Activated B cell treated with CpG ODN at 0.5 μM for 24 hours (primary cell): ENCODE measurements at regions of chr2 and their contacts with region 1.

Region 1: DNA sequence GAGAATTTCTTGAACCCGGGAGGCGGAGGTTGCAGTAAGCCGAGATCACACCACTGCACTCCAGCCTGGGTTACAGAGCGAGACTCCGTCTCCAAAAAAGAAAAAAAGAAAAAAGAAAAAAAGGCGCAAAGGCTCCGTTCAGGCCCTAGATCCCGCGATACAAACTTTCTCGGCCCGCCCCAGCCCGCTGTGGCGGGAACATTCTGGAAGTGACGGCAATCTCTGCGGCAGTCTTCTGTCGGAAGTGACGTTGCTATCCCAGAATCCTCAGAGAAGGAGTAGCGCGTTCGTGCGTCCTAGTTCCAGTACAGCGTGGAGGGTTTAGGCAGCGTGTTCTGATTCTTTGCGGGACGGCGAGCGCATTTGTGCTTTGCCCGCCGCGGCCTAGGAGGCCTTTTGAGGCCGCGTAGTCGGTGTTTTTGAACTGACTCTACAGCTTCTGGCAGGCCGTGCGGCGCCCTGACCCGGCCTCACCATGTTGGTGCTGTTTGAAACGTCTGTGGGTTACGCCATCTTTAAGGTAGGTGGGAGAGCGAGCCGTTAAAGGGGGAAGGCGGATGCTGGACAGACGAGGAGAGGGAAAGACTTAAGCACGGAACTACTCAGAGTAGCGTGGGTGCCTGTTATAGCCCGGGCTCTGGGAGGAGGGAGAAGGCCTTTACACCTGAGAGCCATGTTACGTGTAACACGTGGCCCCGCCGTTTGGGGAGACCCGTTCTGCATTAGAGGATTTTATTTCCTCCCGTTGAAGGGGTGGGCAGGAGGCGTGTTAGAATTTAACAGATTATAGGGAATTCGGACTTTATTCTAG is at the start of gene NOP58:
- DNase-seq: peak; percentile 78
- ATAC-seq: peak; percentile 87
- H3K4me3 Mint-ChIP-seq: peak within 1 kb of the TSS; percentile 38
- H3K27ac Mint-ChIP-seq: no peak within 1 kb of the TSS
- H3K4me1 Mint-ChIP-seq: peaks cover 30% of the 10 kb centered on the region
- H3K27me3 Mint-ChIP-seq: no peaks in the 10 kb centered on the region
- CTCF ChIP-seq: no peak
- total RNA-seq, gene NOP58: 141 and 153 TPM in 2 replicates

Region 2: DNA sequence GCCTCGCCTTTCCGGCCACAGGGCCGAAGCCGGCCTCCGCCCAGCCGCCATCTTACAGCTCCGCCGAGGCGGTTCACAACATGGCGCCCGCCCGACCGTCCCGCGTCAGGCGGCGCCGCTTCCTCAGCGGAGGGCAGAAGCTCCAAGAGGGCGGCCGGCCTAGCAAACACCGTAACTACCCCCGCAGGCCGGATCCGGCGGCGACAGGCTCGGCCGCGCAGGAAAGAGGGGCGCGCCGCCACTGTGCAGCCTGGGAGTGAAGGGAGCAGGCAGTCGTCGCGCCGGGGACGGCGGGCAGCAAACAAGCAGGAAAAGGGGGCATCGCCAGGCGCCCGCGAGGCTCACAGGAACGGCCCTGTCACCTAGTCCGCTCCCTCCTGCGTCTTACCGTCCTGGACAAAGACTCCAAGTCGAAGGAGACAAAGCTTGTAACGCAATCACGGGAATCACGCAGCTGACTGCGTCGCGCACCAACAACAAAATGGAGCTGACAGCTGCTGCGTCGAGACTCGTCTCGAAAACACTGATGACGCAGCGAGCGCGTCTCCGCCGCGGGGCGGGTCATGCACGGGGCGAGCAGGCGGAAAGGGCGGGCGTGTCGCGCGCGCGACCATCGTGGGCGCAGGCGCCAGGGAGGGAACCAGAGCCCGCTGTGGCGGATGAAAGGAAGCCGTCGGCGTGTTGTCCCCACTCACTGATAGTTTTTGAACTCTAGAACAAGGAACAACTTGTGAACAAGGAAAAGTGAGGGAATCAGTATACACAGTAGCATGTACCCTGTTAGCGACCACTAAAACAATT is 1401.3 kb before region 1 on chr2 and contains the start of gene CLK1:
- CTCF ChIA-PET with region 1: no interaction called
- POLR2A ChIA-PET with region 1: interaction called, 5 read pairs
- intact Hi-C with region 1: loop called (anchors 5 kb)
- DNase-seq: peak; percentile 90
- ATAC-seq: peak; percentile 82
- H3K4me3 Mint-ChIP-seq: peak within 1 kb of the TSS; percentile 100
- H3K27ac Mint-ChIP-seq: peak within 1 kb of the TSS; percentile 100
- H3K4me1 Mint-ChIP-seq: peaks cover 41% of the 10 kb centered on the region
- H3K27me3 Mint-ChIP-seq: no peaks in the 10 kb centered on the region
- CTCF ChIP-seq: no peak
- total RNA-seq, gene CLK1: 173 and 203 TPM in 2 replicates

Region 3: GRCh38 chr2:201130524-201131186 is 1135.0 kb before region 1 on chr2:
- CTCF ChIA-PET with region 1: no interaction called
- POLR2A ChIA-PET with region 1: no interaction called
- intact Hi-C with region 1: loop called (anchors 5 kb)
- DNase-seq: no peak
- ATAC-seq: no peak
- H3K4me3 Mint-ChIP-seq: peak overlapping the region; percentile 87
- H3K27ac Mint-ChIP-seq: peak overlapping the region; percentile 92
- H3K4me1 Mint-ChIP-seq: peaks cover 82% of the 10 kb centered on the region
- H3K27me3 Mint-ChIP-seq: no peaks in the 10 kb centered on the region
- CTCF ChIP-seq: no peak

Region 4: GRCh38 chr2:201780674-201781581 is 484.7 kb before region 1 on chr2 and contains the start of gene ALS2:
- CTCF ChIA-PET with region 1: no interaction called
- POLR2A ChIA-PET with region 1: interaction called, 13 read pairs
- intact Hi-C with region 1: loop called (anchors 1 kb)
- DNase-seq: peak; percentile 95
- ATAC-seq: peak; percentile 90
- H3K4me3 Mint-ChIP-seq: peak within 1 kb of the TSS; percentile 96
- H3K27ac Mint-ChIP-seq: peak within 1 kb of the TSS; percentile 95
- H3K4me1 Mint-ChIP-seq: peaks cover 17% of the 10 kb centered on the region
- H3K27me3 Mint-ChIP-seq: peaks cover 8% of the 10 kb centered on the region
- CTCF ChIP-seq: no peak
- total RNA-seq, gene ALS2: 11.6 and 14.2 TPM in 2 replicates

Region 5: DNA sequence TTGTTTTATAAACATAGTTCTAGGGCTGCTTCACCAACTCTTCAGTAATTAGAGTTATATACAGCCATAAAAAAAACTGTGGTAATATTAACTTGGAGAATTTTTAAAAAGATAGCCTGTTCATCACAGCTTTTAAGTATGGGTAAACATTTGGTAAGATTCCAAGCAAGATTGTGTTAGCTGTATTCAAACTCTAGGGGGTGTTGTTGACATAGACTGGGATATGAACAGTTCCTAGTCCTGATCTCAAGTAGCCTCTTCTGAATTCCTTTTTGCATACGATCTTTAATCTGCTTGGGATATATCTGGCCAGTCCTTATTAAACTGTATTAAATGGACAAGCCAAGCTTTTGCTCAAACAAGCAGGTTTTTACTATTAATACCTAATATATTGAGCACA is 13.3 kb after region 1 on chr2:
- CTCF ChIA-PET with region 1: interaction called, 5 read pairs
- POLR2A ChIA-PET with region 1: interaction called, 3 read pairs
- intact Hi-C with region 1: loop called (anchors 1 kb)
- DNase-seq: no peak
- ATAC-seq: no peak
- H3K4me3 Mint-ChIP-seq: no peak overlapping the region
- H3K27ac Mint-ChIP-seq: no peak overlapping the region
- H3K4me1 Mint-ChIP-seq: peaks cover 10% of the 10 kb centered on the region
- H3K27me3 Mint-ChIP-seq: no peaks in the 10 kb centered on the region
- CTCF ChIP-seq: no peak

Region 6: DNA sequence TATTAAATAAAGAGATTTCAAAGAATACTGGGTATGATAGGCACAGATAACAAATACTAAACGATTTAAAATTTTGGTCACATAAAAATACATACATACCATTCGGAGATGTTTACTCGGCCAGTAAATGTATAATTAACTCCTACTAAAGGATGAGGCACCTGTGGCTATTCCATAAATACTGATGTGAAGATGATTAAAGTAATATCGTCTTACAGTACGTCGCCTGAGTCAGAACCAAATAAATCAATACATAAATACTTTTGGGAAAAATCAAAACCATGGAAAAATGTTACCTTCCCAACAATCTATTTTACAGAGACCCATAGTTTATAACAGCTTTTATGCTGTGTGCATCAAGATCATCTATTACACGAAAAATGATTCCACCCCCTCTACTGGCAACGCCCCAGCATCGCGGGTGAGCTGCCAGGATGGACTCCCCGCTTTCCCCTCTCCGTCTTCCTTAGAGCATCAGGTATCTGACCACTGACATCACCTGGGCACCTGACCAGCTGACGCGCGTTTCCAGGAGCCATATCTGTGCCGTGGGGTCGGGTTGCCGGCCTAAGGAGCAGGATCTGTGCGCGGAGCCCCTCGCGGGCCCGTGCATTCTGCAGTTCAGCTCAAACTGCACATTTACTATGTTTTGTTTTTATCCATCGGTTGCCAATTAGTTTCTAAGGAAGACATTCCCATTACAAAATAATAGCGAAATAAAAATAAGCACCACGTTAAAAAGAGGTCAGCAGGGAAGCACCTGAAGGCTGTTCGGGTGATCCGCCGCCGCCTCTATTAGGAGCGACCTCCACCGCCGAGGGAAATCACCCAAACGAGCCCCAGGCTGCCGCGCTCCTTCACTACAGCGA is 605.0 kb after region 1 on chr2:
- CTCF ChIA-PET with region 1: no interaction called
- POLR2A ChIA-PET with region 1: no interaction called
- intact Hi-C with region 1: loop called (anchors 2 kb)
- DNase-seq: peak; percentile 53
- ATAC-seq: peak; percentile 81
- H3K4me3 Mint-ChIP-seq: peak overlapping the region; percentile 92
- H3K27ac Mint-ChIP-seq: peak overlapping the region; percentile 81
- H3K4me1 Mint-ChIP-seq: peaks cover 5% of the 10 kb centered on the region
- H3K27me3 Mint-ChIP-seq: no peaks in the 10 kb centered on the region
- CTCF ChIP-seq: peak; percentile 12